GM13976 (cell line): ENCODE measurements at regions of chr17 and their contacts with region 1.

Region 1: DNA sequence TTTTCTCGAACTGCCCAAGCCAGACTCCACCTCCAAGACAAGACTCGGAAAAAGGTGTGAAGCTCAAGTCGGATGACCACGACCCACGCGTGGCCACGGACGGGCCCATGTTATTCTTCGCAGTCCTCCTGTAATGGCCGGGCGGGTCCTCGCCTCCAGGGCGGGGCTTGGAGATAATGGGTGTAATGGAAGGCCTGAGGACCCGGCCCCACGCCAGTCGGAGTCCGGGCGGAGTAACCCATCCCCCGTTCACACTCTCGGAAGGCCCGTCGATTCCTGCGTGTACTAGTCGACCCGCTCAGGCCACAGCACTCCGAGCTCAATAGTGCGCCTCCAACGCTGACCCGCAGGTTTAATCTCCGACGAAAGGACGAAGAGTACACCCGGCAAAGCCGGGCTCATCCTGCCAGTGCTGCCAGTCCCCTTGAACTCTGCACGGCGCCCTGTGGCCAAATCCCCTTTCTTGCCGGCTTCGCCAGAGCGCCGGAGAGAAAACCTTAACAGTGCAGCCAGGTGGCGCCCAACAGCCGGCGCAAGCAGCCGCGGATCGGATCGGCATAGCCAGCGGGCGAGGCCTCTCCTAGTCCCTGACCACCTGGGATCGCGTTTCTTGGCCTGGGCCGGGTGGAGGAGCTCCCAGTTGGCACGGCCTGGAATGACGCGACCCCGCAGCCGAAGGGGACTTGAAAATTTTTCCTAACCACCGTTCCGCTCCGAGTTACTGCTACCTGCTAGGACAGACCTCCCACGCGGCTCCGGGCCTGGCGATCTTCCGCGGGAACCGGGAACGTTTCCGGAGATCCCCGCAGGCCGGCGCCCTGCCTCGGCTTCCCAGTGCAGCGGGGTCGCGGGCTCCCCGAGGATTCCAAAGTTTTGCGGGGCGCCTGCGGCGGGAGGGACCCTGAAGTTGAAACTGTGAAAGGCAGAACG is 762.0 kb downstream of the KCNJ18 start:
- DNase-seq: no peak
- CTCF ChIP-seq: no peak

Region 2: DNA sequence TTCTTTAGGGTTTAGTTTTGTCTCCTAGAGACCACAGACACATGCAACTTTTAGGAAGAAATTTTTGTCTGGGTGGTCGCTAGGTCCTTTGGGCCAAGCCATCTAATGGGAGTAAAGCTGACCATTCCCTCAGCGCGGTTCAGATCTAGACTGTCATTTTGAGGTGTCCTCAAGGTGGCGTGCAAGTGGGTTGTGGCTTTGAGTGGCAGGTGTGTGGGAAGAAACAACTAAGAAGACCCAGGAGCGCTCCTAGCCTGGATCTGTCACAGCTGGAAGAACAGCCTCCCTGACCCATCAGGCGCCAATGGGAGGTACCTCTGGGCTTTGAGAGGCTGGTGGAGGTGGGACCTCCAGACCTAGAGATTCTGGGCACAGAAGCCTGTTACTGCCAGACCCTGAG is 116.9 kb before region 1 on chr17:
- in situ Hi-C with region 1: loop called (anchors 25 kb)
- DNase-seq: no peak
- CTCF ChIP-seq: no peak